Common myeloid progenitor, CD34-positive (primary cell): ENCODE measurements at regions of chr2 and their contacts with region 1.

Region 1: DNA sequence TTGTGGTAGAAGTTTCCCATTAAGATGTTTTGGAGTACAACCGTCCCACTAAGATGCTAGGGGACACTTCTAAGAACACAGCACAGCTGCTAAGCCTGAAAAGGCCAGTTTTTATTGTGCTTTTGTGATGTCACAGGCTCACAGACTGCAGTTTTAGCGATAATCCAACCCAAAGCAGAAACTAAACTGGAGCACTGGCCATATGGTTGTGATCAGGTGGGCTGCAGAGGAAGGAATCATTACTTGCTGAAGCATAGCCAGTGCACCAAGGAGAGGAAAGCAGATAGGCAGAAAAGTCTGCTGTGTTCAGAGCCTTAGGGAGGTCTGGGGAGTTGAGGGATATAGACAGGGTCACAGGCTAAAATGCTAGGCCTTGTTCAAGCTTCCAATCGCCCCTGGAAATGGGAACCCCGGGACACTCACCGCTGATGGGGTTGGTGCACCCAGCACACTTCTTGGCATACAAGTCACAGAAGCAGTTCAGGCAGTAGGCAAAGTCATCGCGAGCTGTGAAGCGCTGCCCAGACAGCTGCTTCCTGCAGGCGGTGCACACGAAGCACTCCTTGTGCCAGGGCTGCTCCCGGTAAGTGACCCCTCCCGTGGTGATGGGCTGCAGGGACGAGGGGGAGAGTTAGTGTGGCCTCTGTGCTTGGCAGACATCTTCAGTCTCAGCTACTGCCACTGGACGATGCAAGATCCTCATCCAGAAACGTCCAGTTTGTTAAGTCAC is 25.7 kb downstream of the C2orf49 start:
- DNase-seq: peak in 2 of 3 donors; percentile 72 to 81
- H3K4me3 ChIP-seq: peak overlapping the region in 1 of 7 experiments; percentile 29
- H3K27ac ChIP-seq: no peak overlapping the region
- H3K4me1 ChIP-seq: peaks cover 10 to 33% (median 31%) of the 10 kb centered on the region in 4 experiments
- H3K27me3 ChIP-seq: no peaks in the 10 kb centered on the region

Region 2: DNA sequence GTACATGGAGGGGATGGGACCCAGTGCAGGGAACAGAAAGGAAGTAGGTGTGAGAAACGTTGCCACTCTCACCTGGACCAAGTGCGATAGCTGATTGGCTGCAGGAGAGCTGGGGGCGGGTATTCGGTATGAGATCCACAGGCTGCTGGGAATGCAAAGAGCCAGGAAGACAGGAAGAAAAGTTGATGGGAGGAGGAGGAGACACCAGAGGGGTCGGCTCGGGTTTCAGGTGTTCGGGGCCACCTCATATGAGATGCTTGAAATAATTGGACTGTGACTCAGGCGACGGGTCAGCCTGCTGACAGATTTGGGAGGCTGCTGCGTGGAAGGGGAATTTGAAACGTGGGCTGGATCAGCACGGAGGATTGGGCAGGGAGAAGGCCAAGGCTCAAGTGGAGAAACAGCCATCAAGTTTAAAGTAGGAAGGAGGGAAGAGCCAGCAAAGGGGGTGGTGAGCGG is 260.0 kb before region 1 on chr2:
- CTCF ChIA-PET with region 1: no interaction called
- POLR2A ChIA-PET with region 1: no interaction called
- DNase-seq: no peak
- H3K4me3 ChIP-seq: no peak overlapping the region
- H3K27ac ChIP-seq: no peak overlapping the region
- H3K4me1 ChIP-seq: no peaks in the 10 kb centered on the region
- H3K27me3 ChIP-seq: no peaks in the 10 kb centered on the region

Region 3: DNA sequence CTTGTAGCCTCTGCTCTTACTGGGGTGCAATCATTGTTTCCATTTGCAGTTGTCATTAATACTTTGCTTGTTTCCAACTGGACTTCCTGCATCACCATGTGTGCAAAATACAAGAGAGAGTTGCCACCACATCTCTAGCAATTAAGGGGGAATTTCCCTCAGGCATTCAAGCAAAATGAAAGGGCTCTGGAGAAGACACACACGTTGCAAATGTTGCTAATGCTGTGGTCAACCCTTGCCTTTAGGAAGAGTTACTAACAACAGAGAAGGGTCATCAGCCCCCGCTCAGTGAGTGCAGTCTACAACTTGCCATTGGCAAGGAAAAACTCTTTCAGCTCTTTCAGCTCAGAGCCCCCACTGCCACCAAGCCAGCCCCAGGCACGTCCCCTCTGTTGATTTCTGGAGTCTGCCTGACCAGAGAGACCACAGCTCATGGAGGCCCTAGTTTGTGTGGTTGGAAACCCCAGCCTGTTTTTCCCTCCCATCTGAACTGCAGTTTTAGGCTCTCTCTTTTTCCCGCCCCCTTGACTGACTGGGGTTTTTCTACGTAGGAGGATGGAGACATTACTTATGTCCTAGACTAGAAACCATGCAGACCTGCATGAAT is 147.3 kb before region 1 on chr2:
- CTCF ChIA-PET with region 1: no interaction called
- POLR2A ChIA-PET with region 1: no interaction called
- DNase-seq: no peak
- H3K4me3 ChIP-seq: no peak overlapping the region
- H3K27ac ChIP-seq: no peak overlapping the region
- H3K4me1 ChIP-seq: no peaks in the 10 kb centered on the region
- H3K27me3 ChIP-seq: no peaks in the 10 kb centered on the region

Region 4: GRCh38 chr2:105262651-105263091 is 100.4 kb before region 1 on chr2:
- CTCF ChIA-PET with region 1: no interaction called
- POLR2A ChIA-PET with region 1: no interaction called
- DNase-seq: no peak
- H3K4me3 ChIP-seq: no peak overlapping the region
- H3K27ac ChIP-seq: no peak overlapping the region
- H3K4me1 ChIP-seq: no peaks in the 10 kb centered on the region
- H3K27me3 ChIP-seq: no peaks in the 10 kb centered on the region

Region 5: GRCh38 chr2:105299295-105299694 is 63.7 kb before region 1 on chr2:
- CTCF ChIA-PET with region 1: no interaction called
- POLR2A ChIA-PET with region 1: no interaction called
- DNase-seq: peak in 2 of 3 donors; percentile 35 to 44
- H3K4me3 ChIP-seq: no peak overlapping the region
- H3K27ac ChIP-seq: peak overlapping the region in 1 of 2 experiments; percentile 7
- H3K4me1 ChIP-seq: peaks cover 0 to 26% (median 8%) of the 10 kb centered on the region in 4 experiments
- H3K27me3 ChIP-seq: no peaks in the 10 kb centered on the region

Region 6: GRCh38 chr2:105411720-105412407 is 48.8 kb after region 1 on chr2:
- CTCF ChIA-PET with region 1: interaction called, 13 read pairs
- POLR2A ChIA-PET with region 1: no interaction called
- DNase-seq: no peak
- H3K4me3 ChIP-seq: no peak overlapping the region
- H3K27ac ChIP-seq: no peak overlapping the region
- H3K4me1 ChIP-seq: peaks cover 6 to 36% (median 29%) of the 10 kb centered on the region in 4 experiments
- H3K27me3 ChIP-seq: no peaks in the 10 kb centered on the region